ENCODE measurements at regions of chr18 and their contacts with region 1.

Region 1: GRCh38 chr18:32470713-32471633 is at the start of gene GAREM1:
- DNase-seq: peak; percentile 81 to 97
- H3K4me3 ChIP-seq: peak within 1 kb of the TSS; percentile 74 to 82
- H3K27ac ChIP-seq: peak within 1 kb of the TSS; percentile 81 to 84
- H3K4me1 ChIP-seq: peaks cover 0 to 8% of the 10 kb centered on the region in 2 donors
- H3K27me3 ChIP-seq: no peaks in the 10 kb centered on the region
- CTCF ChIP-seq: peak; percentile 56 to 92 (median 81)
- total RNA-seq, gene GAREM1: 8.9 TPM

Region 2: GRCh38 chr18:31942999-31943865 is 527.7 kb before region 1 on chr18 and contains the start of gene TRAPPC8:
- intact Hi-C with region 1: loop called (anchors 5 kb)
- DNase-seq: peak; percentile 94 to 99
- H3K4me3 ChIP-seq: peak within 1 kb of the TSS; percentile 87 to 95
- H3K27ac ChIP-seq: peak within 1 kb of the TSS; percentile 89 to 92
- H3K4me1 ChIP-seq: peaks cover 3 to 10% of the 10 kb centered on the region in 2 donors
- H3K27me3 ChIP-seq: no peaks in the 10 kb centered on the region
- CTCF ChIP-seq: peak in 1 of 3 experiments; percentile 32
- total RNA-seq, gene TRAPPC8: 6.8 TPM

Region 3: GRCh38 chr18:32139835-32140283 is 331.1 kb before region 1 on chr18:
- intact Hi-C with region 1: no loop called
- DNase-seq: no peak
- H3K4me3 ChIP-seq: no peak overlapping the region
- H3K27ac ChIP-seq: no peak overlapping the region
- H3K4me1 ChIP-seq: no peaks in the 10 kb centered on the region
- H3K27me3 ChIP-seq: no peaks in the 10 kb centered on the region
- CTCF ChIP-seq: no peak

Region 4: DNA sequence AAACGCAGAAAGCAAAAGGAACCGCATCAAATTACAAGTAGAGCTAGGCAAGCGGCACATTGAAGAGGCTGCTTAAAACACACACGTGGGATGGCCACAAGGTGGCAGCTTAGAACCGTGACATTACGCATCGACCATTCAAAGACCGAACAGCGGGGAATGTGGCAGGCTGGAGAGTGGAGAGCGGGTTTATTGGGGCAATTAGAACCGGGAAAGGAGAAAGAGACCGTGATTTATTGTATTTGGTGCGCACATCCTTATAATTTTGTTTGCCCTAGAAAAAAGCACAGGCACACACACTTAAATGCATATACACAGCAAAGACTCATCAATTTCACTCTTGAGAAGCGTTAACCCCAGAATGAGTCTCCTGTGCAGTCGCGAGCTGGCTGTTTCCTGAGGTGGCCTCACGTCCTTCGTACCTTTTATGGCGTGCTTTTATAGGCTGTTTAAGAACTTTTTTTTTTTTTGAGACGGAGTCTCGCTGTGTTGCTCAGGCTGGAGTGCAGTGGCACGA is 312.8 kb before region 1 on chr18:
- intact Hi-C with region 1: loop called (anchors 2 kb)
- DNase-seq: peak in 1 of 2 donors; percentile 87
- H3K4me3 ChIP-seq: peak overlapping the region; percentile 24 to 55
- H3K27ac ChIP-seq: no peak overlapping the region
- H3K4me1 ChIP-seq: no peaks in the 10 kb centered on the region
- H3K27me3 ChIP-seq: no peaks in the 10 kb centered on the region
- CTCF ChIP-seq: peak; percentile 81 to 92 (median 83)

Region 5: DNA sequence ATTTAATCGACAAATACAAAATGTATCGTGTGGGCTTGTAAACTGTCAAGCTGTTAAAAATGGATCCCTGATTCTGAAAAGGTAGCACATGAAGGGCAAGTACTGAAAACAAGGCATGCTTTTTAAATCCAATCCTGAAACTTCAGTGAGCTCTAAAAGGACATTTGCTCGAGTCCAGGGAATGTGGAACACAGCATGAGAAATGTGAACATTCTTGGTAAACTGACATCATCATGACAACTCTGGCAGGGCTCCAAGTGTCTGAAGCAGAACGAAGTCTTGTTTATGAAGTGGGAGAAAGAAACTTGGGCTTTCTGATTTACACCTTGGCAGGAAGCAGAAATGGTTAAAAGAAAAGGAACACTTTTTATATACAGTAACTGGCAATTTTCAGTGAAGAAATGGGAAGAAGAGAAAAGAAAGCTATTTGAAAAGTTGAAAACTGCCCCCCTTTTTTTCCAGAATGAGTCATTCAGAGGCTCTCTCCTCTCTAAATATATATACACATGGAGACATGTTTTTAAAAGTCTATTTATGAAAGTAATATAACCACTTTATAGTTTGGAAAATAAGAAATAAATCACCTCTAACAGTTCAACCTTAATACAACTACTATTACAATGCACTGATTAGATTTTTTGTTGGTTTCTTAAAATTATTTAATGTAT is 121.1 kb before region 1 on chr18:
- intact Hi-C with region 1: loop called (anchors 2 kb)
- DNase-seq: peak; percentile 17 to 91
- H3K4me3 ChIP-seq: peak overlapping the region in 1 of 2 donors; percentile 1
- H3K27ac ChIP-seq: peak overlapping the region; percentile 78 to 85
- H3K4me1 ChIP-seq: peaks cover 0 to 47% of the 10 kb centered on the region in 2 donors
- H3K27me3 ChIP-seq: no peaks in the 10 kb centered on the region
- CTCF ChIP-seq: no peak

Region 6: GRCh38 chr18:32372381-32373061 is 98.5 kb before region 1 on chr18:
- intact Hi-C with region 1: no loop called
- DNase-seq: no peak
- H3K4me3 ChIP-seq: no peak overlapping the region
- H3K27ac ChIP-seq: no peak overlapping the region
- H3K4me1 ChIP-seq: peaks cover 0 to 8% of the 10 kb centered on the region in 2 donors
- H3K27me3 ChIP-seq: no peaks in the 10 kb centered on the region
- CTCF ChIP-seq: no peak

Region 7: DNA sequence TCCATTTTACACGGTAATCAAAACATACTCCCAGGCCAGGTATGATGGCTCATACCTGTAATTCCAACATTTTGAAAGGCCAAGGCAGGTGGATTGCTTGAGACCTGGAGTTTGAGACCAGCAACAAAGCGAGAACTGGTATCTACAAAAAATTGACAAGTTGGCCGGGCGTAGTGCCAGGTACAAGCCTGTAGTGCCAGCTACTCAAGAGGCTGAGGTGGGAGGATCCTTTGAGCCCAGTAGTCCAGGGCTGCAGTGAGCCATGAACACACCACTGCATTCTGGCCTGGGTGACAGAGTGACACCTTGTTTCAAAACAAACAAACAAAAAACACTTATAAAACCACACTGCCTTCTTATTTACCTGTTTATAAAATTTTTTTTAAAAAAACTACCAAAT is 81.1 kb before region 1 on chr18:
- intact Hi-C with region 1: no loop called
- DNase-seq: no peak
- H3K4me3 ChIP-seq: no peak overlapping the region
- H3K27ac ChIP-seq: no peak overlapping the region
- H3K4me1 ChIP-seq: no peaks in the 10 kb centered on the region
- H3K27me3 ChIP-seq: no peaks in the 10 kb centered on the region
- CTCF ChIP-seq: no peak

Region 8: DNA sequence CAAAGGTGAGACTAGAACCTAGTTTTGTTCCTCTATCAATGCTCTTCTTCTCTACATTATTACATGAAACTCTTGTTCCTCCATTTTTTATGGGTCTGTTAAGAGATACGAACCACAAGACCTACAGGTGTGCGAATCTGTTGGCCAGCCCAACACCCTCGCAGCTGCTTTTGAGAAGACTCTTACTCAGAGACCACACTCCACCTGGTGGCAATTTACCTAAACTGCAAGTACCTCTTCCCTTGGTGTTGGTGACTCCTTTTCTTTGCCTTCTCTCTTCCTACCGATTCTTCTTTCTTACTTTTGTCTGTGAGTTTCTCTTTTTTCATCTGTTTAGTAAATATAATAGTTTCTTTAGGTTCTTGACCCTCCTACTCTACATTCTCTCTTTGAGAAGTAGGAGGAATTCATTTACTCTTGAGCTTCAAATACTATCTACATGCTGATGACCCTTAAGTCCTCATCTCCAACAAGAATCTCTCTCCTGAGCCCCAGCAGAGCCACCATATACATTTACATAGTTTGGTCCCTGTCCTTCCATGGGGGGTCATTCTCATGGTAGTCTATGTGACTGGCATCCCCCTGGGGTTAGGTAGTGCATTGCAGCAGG is 81.6 kb after region 1 on chr18:
- intact Hi-C with region 1: loop called (anchors 2 kb)
- DNase-seq: no peak
- H3K4me3 ChIP-seq: no peak overlapping the region
- H3K27ac ChIP-seq: no peak overlapping the region
- H3K4me1 ChIP-seq: no peaks in the 10 kb centered on the region
- H3K27me3 ChIP-seq: no peaks in the 10 kb centered on the region
- CTCF ChIP-seq: peak; percentile 47 to 68 (median 56)